WTC11 (cell line): ENCODE measurements at regions of chr1 and their contacts with region 1.

Region 1: DNA sequence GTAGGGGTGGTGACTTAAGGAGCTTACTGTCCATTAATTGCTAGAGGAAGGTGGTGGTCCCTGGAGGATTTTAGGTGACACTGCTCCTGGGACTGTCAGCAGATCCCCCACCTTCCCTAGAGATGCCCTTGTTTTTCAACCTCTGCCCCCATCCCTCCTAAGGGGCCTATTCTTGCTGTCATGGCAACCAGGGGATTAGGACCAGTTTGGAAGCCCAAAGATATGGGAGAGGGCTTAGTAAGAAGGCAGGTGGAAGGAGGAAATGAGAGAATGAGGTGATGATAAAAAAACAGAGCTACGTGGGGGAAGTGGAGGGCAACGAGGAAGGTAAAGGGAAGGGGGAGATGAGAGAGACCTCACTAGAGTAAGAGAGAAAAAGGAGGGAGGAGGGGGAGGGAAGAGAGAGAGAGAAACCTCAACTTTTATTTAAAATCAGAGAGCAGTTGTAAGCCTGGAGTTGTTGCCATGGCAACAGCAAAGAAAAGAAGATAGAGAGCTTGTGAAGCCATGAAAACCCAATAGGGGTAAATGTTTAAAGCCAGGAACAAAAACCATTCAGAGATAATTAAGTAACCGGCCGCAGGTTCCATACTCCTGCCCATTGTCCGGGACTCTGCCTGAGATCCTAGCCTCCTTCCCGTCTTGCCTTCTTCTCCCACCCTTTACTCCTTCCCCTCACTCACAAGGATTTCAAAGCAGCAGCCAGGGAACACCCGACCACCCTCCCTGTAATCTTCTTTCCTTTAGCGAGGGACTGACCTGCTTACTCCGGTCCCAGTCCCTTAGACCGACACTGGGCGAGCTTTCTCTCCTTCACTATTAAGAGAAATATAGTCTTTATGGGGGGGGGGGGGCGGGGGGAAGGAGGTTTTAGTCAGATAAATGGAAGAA is 20.6 kb downstream of the KIRREL1 start:
- DNase-seq: no peak
- ATAC-seq: peak; percentile 4
- H3K4me3 Mint-ChIP-seq: peak overlapping the region; percentile 44
- H3K27ac Mint-ChIP-seq: peak overlapping the region; percentile 96
- H3K4me1 Mint-ChIP-seq: peaks cover 95% of the 10 kb centered on the region
- H3K27me3 Mint-ChIP-seq: no peaks in the 10 kb centered on the region
- CTCF ChIP-seq: no peak

Region 2: GRCh38 chr1:158002022-158002630 is 12.0 kb before region 1 on chr1:
- CTCF ChIA-PET with region 1: interaction called, 174 read pairs
- POLR2A ChIA-PET with region 1: interaction called, 4 read pairs
- DNase-seq: no peak
- ATAC-seq: peak; percentile 34
- H3K4me3 Mint-ChIP-seq: no peak overlapping the region
- H3K27ac Mint-ChIP-seq: peak overlapping the region; percentile 82
- H3K4me1 Mint-ChIP-seq: peaks cover 84% of the 10 kb centered on the region
- H3K27me3 Mint-ChIP-seq: no peaks in the 10 kb centered on the region
- CTCF ChIP-seq: no peak

Region 3: DNA sequence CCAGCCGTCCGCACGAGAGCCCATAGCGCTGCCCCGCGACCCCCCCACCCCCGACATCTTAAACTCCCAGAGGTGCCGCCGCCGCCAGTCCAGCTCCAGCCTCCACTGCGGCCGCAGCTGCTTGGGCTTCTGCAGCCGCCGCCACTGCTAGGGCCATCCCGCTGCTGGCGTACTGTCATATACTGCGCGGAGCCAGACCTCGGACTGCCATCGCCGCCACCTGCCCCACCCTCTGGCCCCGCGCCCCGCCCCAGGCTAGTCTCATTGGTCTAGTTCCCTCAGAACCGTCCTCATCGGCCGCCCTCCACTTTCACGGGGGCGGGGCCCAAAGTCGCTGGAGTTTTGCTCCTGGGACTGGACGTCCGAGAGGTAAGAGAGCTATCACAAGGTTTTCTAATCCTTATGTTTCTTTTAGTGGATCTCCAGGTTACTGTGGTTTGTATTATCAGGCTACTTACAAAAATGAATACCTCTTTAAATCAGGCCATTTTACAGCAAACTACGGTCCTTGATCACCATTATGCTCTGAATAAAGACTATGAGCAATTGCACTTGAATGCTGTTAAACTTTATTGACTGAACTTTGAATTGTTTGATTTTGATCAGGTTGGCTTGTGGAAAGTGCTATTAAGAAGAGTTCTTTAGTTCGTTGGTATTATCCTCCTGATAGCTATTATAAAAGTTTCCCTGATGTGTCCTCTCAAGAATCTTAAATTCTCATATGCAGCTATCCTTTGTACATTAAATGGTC is 163.8 kb after region 1 on chr1:
- CTCF ChIA-PET with region 1: no interaction called
- POLR2A ChIA-PET with region 1: no interaction called
- DNase-seq: peak; percentile 95
- ATAC-seq: peak; percentile 90
- H3K4me3 Mint-ChIP-seq: peak overlapping the region; percentile 66
- H3K27ac Mint-ChIP-seq: no peak overlapping the region
- H3K4me1 Mint-ChIP-seq: peaks cover 41% of the 10 kb centered on the region
- H3K27me3 Mint-ChIP-seq: peaks cover 80% of the 10 kb centered on the region
- CTCF ChIP-seq: no peak